GM12878 (cell line): ENCODE measurements at regions of chr2 and their contacts with region 1.

Region 1: GRCh38 chr2:215931256-215931903 is 82.0 kb downstream of the MREG start:
- DNase-seq: no peak
- ATAC-seq: peak; percentile 97
- H3K4me3 ChIP-seq: no peak overlapping the region
- H3K27ac ChIP-seq: no peak overlapping the region
- H3K4me1 ChIP-seq: peaks cover 4% of the 10 kb centered on the region; the same call in 1 of the 2 replicates
- H3K27me3 ChIP-seq: no peaks in the 10 kb centered on the region
- CTCF ChIP-seq: peak; percentile 82 to 96 (median 93)
- EP300 ChIP-seq: no peak
- POLR2A ChIP-seq: no peak
- RAD21 ChIP-seq: peak; percentile 96

Region 2: GRCh38 chr2:214960677-214961076 is 970.7 kb before region 1 on chr2:
- CTCF ChIA-PET with region 1: interaction called, 10 read pairs
- POLR2A ChIA-PET with region 1: no interaction called
- RAD21 ChIA-PET with region 1: interaction called, 8 read pairs
- SMC1A ChIA-PET with region 1: interaction called, 5 read pairs
- in situ Hi-C with region 1: no loop called
- intact Hi-C with region 1: no loop called
- DNase-seq: no peak
- ATAC-seq: peak; percentile 29; the same call in 1 of the 3 replicates
- H3K4me3 ChIP-seq: no peak overlapping the region
- H3K27ac ChIP-seq: no peak overlapping the region; the same call in 1 of the 2 replicates
- H3K4me1 ChIP-seq: no peaks in the 10 kb centered on the region
- H3K27me3 ChIP-seq: no peaks in the 10 kb centered on the region
- CTCF ChIP-seq: peak in 1 of 3 experiments; percentile 14; a peak in 2 of 6 replicates
- EP300 ChIP-seq: no peak
- POLR2A ChIP-seq: no peak
- RAD21 ChIP-seq: no peak

Region 3: GRCh38 chr2:215311625-215312396 is 619.6 kb before region 1 on chr2 and contains the start of gene ATIC:
- CTCF ChIA-PET with region 1: interaction called, 4 read pairs
- POLR2A ChIA-PET with region 1: no interaction called
- RAD21 ChIA-PET with region 1: interaction called, 11 read pairs
- SMC1A ChIA-PET with region 1: interaction called, 3 read pairs
- in situ Hi-C with region 1: no loop called
- intact Hi-C with region 1: no loop called
- DNase-seq: peak; percentile 70
- ATAC-seq: peak; percentile 97
- H3K4me3 ChIP-seq: peak within 1 kb of the TSS; percentile 86
- H3K27ac ChIP-seq: peak within 1 kb of the TSS; percentile 97
- H3K4me1 ChIP-seq: no peaks in the 10 kb centered on the region; the same call in 1 of the 2 replicates
- H3K27me3 ChIP-seq: no peaks in the 10 kb centered on the region
- CTCF ChIP-seq: 0 out of 6 replicates have a peak, but pooled peaks of 1 of the 3 experiments have one; percentile 1
- EP300 ChIP-seq: no peak
- POLR2A ChIP-seq: peak; percentile 98
- RAD21 ChIP-seq: no peak
- polyA plus RNA-seq, gene ATIC: 313 to 518 TPM

Region 4: GRCh38 chr2:215949991-215950404 is 18.6 kb after region 1 on chr2:
- CTCF ChIA-PET with region 1: interaction called, 17 read pairs
- POLR2A ChIA-PET with region 1: interaction called, 3 read pairs
- RAD21 ChIA-PET with region 1: interaction called, 3 read pairs
- SMC1A ChIA-PET with region 1: interaction called, 4 read pairs
- in situ Hi-C with region 1: no loop called
- intact Hi-C with region 1: no loop called
- DNase-seq: peak; percentile 30
- ATAC-seq: peak; percentile 97
- H3K4me3 ChIP-seq: no peak overlapping the region
- H3K27ac ChIP-seq: no peak overlapping the region
- H3K4me1 ChIP-seq: no peaks in the 10 kb centered on the region
- H3K27me3 ChIP-seq: no peaks in the 10 kb centered on the region
- CTCF ChIP-seq: peak; percentile 46 to 63 (median 62)
- EP300 ChIP-seq: no peak
- POLR2A ChIP-seq: no peak
- RAD21 ChIP-seq: peak; percentile 89

Region 5: DNA sequence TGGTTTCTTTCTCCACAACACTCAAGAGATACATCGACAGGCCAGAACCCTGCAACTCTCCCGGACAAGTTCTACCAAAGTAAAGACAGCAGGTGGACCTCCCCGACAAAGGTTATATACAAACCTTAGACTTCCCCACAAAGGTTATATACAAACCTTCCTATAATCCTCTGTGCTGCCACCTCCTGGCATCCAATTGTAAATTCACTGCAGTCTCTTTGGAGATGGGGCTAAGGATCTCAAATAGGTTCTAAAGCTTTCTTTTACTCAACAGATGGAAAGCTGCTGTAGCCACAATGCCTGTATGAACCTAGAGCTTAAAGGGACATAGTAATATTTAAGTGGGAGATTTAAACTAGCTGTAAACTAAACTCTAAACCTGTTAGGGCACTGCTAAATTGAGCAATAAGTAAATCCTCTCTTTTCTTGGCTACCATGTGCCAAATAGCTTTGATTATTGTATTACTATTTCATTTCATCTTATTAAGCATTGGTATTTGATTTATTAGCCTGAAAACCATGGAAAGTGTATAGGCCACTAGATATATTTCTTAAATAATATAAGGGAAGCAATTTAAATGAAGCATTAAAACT is 91.8 kb after region 1 on chr2:
- CTCF ChIA-PET with region 1: interaction called, 7 read pairs
- POLR2A ChIA-PET with region 1: no interaction called
- RAD21 ChIA-PET with region 1: interaction called, 5 read pairs
- SMC1A ChIA-PET with region 1: interaction called, 14 read pairs
- in situ Hi-C with region 1: no loop called
- intact Hi-C with region 1: no loop called
- DNase-seq: no peak
- ATAC-seq: peak; percentile 97
- H3K4me3 ChIP-seq: no peak overlapping the region
- H3K27ac ChIP-seq: no peak overlapping the region
- H3K4me1 ChIP-seq: no peaks in the 10 kb centered on the region
- H3K27me3 ChIP-seq: no peaks in the 10 kb centered on the region
- CTCF ChIP-seq: peak; percentile 70 to 73 (median 71)
- EP300 ChIP-seq: no peak
- POLR2A ChIP-seq: no peak
- RAD21 ChIP-seq: peak; percentile 89